ENCODE measurements at regions of chr6 and their contacts with region 1.

Region 1: DNA sequence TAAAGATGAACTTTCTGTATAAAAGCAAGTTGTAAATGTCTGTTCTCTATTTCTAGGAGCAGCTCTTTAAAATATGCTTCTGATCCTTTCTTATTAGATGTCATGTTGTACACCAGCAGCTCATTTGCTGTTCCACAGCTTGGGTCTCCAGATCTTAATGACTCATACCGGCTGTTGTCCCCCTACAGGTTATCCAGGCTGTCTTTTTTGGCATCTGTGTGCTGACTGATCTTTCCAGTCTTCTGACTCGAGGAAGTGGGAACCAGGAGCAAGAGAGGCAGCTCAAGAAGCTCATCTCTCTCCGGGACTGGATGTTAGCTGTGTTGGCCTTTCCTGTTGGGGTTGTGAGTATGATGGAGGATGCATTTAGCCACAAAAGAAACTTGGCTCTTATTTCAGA is 76.0 kb downstream of the AIG1 start:
- DNase-seq: no peak
- ATAC-seq: no peak
- H3K4me3 Mint-ChIP-seq: no peak overlapping the region
- H3K27ac Mint-ChIP-seq: peak overlapping the region; percentile 78
- H3K4me1 Mint-ChIP-seq: peaks cover 52% of the 10 kb centered on the region
- H3K27me3 Mint-ChIP-seq: no peaks in the 10 kb centered on the region

Region 2: DNA sequence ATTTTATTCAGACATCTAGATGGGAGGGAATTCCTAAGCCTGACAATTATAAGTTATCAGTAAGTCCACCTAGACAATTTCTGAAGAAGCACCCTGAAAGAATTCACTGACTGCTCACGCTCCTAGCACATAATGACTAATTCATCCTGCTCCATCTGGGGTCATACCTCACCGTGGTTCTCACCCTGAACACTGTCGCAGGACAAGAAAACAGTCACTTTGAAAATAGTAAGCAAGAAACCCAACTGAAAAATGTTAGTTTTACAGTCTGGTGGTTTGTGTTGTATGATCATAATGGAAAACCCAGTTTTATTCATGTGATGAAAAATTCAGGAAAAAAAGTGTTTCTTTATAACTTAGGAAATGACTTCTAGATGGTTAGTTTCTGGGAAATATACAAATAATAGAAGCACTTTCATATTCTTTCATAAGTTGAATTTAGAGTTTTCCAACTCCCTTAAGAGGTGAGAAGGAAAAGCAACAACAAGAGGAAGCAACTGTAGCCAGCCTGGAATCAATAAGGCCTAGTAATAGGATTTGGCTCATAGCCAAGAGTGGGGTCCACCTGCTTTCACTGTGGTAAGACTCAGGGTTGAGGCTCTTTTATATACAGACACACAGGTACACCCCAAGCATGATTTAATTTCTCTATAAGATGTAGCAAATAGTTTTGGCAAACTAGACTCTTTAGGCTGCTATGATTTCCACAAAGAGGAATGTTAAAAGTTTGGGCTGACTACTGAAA is 285.8 kb before region 1 on chr6:
- CTCF ChIA-PET with region 1: no interaction called
- POLR2A ChIA-PET with region 1: no interaction called
- intact Hi-C with region 1: loop called in 1 of 2 experiments (anchors 5 kb)
- DNase-seq: peak; percentile 66
- ATAC-seq: peak; percentile 67
- H3K4me3 Mint-ChIP-seq: peak overlapping the region; percentile 37
- H3K27ac Mint-ChIP-seq: peak overlapping the region; percentile 86
- H3K4me1 Mint-ChIP-seq: peaks cover 95% of the 10 kb centered on the region
- H3K27me3 Mint-ChIP-seq: no peaks in the 10 kb centered on the region

Region 3: DNA sequence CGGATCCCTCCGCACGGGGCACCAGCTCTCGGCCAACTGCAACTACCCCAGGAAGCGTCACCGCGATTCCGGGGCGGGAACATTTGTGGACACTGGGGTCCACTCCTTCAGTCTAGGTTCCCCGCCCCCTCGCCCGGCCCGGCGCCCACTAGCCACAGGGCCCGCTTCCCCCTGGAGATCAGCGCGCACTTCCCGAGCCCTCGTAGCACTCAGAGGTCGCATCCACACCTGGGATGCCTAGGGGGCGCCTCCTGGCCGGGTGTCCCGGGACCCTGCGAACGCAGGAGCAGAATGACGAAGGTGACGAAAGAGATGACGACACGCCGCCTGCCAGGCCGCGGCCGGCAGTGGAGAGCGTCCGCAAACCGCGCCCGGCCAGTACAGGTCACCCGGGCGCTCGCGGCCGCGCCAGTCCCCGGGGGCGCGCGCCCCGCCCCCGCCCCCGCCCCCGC is 76.3 kb before region 1 on chr6:
- CTCF ChIA-PET with region 1: no interaction called
- POLR2A ChIA-PET with region 1: interaction called, 3 read pairs
- intact Hi-C with region 1: loop called (anchors 2 to 5 kb)
- DNase-seq: peak; percentile 85
- ATAC-seq: peak; percentile 60
- H3K4me3 Mint-ChIP-seq: peak overlapping the region; percentile 77
- H3K27ac Mint-ChIP-seq: peak overlapping the region; percentile 88
- H3K4me1 Mint-ChIP-seq: peaks cover 30% of the 10 kb centered on the region
- H3K27me3 Mint-ChIP-seq: no peaks in the 10 kb centered on the region

Region 4: DNA sequence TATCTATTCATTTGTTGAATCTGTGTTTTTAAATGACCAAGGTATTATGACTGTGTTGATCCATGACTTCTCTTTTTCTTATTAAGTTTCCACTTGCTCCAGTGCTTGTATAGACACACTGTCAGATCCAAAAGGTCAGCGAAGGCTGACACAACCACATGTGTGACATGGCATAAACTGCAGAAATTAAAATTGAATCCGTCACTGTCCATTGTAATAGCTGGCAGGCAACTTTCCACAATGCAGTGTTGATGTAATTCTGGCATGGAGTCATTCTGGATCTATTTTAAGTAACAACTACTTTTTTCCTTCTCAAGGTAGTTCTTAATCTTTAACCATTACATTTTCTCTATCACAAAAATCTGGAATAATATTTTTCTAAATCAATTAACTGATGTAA is 69.3 kb after region 1 on chr6:
- CTCF ChIA-PET with region 1: no interaction called
- POLR2A ChIA-PET with region 1: no interaction called
- intact Hi-C with region 1: no loop called
- DNase-seq: no peak
- ATAC-seq: no peak
- H3K4me3 Mint-ChIP-seq: no peak overlapping the region
- H3K27ac Mint-ChIP-seq: no peak overlapping the region
- H3K4me1 Mint-ChIP-seq: no peaks in the 10 kb centered on the region
- H3K27me3 Mint-ChIP-seq: no peaks in the 10 kb centered on the region